ENCODE measurements at regions of chr19 and their contacts with region 1.

Region 1: DNA sequence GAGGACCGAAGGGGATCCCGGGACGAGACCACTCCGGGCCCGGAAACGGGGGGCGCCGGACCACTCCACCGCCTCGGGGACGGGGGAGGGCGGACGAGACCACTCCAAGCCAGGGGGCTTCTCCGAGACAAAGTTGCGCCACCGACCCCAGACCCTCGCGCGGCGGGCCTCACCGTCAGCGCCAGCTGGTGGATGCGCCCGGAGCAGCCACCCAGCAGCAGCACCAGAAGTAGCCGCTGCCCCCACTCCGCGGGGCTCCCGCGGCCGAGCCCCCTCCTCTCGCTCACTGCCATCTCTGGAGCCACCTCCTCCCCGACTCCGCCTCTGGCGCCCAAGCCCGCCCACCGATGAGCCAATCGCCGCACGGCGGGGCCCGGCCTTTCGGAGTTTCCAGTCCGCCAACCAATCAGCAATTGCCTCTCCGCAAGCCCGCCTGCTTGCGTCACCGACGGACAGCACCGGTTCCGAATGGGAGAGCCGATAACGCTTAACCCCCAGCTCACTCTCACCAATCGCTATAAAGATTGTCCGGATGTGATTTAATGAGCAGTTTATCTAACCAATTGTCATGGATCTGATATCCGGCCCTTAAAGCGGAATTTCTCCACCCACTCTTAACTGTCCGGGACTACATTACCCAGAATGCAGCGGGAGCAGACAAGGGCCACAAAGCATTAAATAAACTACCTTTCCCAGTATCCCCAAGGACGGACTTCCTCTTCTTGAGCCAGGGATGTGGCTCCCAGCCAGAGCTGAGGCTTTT is at the start of gene GPR108:
- DNase-seq: peak; percentile 97 to 100 (median 99)
- ATAC-seq: peak; percentile 79
- H3K4me3 ChIP-seq: peak within 1 kb of the TSS; percentile 77
- H3K4me3 Mint-ChIP-seq: peak within 1 kb of the TSS; percentile 97
- H3K27ac ChIP-seq: peak within 1 kb of the TSS; percentile 74 to 92
- H3K27ac Mint-ChIP-seq: peak within 1 kb of the TSS; percentile 85
- H3K4me1 ChIP-seq: peaks cover 56% of the 10 kb centered on the region
- H3K4me1 Mint-ChIP-seq: peaks cover 44% of the 10 kb centered on the region
- H3K27me3 ChIP-seq: no peaks in the 10 kb centered on the region
- H3K27me3 Mint-ChIP-seq: no peaks in the 10 kb centered on the region
- CTCF ChIP-seq: no peak
- total RNA-seq, gene GPR108: 34.5 to 36.6 TPM

Region 2: GRCh38 chr19:6460101-6460853 is 277.2 kb before region 1 on chr19:
- CTCF ChIA-PET with region 1: no interaction called
- POLR2A ChIA-PET with region 1: no interaction called
- intact Hi-C with region 1: loop called in 1 of 2 experiments (anchors 5 kb)
- DNase-seq: peak; percentile 95 to 97 (median 96)
- ATAC-seq: peak; percentile 80
- H3K4me3 ChIP-seq: peak overlapping the region; percentile 68
- H3K4me3 Mint-ChIP-seq: peak overlapping the region; percentile 91
- H3K27ac ChIP-seq: peak overlapping the region; percentile 44 to 89
- H3K27ac Mint-ChIP-seq: peak overlapping the region; percentile 86
- H3K4me1 ChIP-seq: peaks cover 36% of the 10 kb centered on the region
- H3K4me1 Mint-ChIP-seq: peaks cover 31% of the 10 kb centered on the region
- H3K27me3 ChIP-seq: no peaks in the 10 kb centered on the region
- H3K27me3 Mint-ChIP-seq: no peaks in the 10 kb centered on the region
- CTCF ChIP-seq: peak; percentile 75

Region 3: GRCh38 chr19:6632002-6632621 is 105.4 kb before region 1 on chr19:
- CTCF ChIA-PET with region 1: interaction called, 12 read pairs
- POLR2A ChIA-PET with region 1: no interaction called
- intact Hi-C with region 1: loop called (anchors 1 kb)
- DNase-seq: peak; percentile 39 to 91 (median 74)
- ATAC-seq: peak; percentile 77
- H3K4me3 ChIP-seq: no peak overlapping the region
- H3K4me3 Mint-ChIP-seq: no peak overlapping the region
- H3K27ac ChIP-seq: no peak overlapping the region
- H3K27ac Mint-ChIP-seq: no peak overlapping the region
- H3K4me1 ChIP-seq: peaks cover 6% of the 10 kb centered on the region
- H3K4me1 Mint-ChIP-seq: peaks cover 4% of the 10 kb centered on the region
- H3K27me3 ChIP-seq: no peaks in the 10 kb centered on the region
- H3K27me3 Mint-ChIP-seq: peaks cover 4% of the 10 kb centered on the region
- CTCF ChIP-seq: peak; percentile 94

Region 4: DNA sequence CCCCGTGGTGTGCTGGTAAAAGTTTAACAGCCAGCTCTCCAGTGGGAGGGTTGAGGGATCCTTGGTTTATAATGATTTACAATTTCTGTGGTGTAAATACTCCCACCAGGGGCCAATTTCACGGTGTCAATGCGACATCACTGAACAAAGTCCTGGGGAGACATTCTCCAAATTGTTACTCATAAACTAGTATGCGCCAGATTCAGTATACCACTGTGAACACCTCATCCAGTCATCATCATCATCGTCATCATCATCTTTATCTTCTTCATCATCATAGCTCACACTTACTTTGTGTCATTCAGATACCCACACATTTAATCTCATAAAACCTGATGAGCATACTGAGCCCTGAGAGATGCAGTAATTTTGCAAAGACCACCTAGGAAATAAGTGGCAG is 50.3 kb before region 1 on chr19:
- CTCF ChIA-PET with region 1: no interaction called
- POLR2A ChIA-PET with region 1: no interaction called
- intact Hi-C with region 1: no loop called
- DNase-seq: no peak
- ATAC-seq: no peak
- H3K4me3 ChIP-seq: no peak overlapping the region
- H3K4me3 Mint-ChIP-seq: no peak overlapping the region
- H3K27ac ChIP-seq: no peak overlapping the region
- H3K27ac Mint-ChIP-seq: no peak overlapping the region
- H3K4me1 ChIP-seq: no peaks in the 10 kb centered on the region
- H3K4me1 Mint-ChIP-seq: no peaks in the 10 kb centered on the region
- H3K27me3 ChIP-seq: peaks cover 0 to 2% of the 10 kb centered on the region in 2 experiments
- H3K27me3 Mint-ChIP-seq: no peaks in the 10 kb centered on the region
- CTCF ChIP-seq: no peak

Region 5: DNA sequence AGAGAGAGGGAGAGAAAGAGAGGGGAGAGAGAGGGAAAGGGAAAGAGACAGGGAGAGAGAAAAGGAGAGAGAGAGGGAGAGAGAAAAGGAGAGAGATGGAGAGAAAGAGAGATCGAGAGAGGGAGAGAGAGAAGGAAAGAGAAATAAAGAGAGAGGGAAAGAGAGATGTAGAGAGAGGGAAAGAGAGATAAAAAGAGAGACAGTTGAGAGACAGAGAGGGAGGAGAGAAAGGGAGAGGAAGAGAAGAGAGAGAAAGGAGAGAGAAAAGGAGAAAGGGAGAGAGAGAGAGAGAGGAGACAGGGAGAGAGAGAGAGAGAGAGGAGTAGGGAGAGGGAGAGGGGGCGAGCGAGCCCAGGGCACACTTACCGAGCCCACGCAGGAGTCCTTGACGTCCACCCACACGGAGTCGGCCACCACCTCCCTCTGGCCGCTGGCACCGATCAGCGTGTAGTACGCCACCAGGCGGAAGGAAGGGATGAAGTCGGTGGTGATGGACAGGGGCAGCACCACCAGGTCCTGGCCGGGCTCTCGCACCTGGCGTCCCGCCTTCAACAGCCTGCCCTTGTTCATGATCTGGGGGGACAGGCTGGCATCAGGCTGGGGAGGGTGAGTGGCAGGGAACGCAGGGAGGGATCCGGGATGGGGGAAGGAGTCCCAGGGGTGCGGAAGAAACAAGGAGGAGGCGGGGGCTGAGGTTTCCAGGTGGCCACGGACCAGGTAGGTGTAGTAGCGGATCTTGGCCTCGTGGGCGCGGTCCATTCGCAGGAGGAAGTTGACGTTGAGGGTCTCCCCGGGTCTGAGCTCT is 27.0 kb before region 1 on chr19:
- CTCF ChIA-PET with region 1: no interaction called
- POLR2A ChIA-PET with region 1: no interaction called
- intact Hi-C with region 1: no loop called
- DNase-seq: peak in 4 of 14 experiments; percentile 11 to 53 (median 24)
- ATAC-seq: no peak
- H3K4me3 ChIP-seq: no peak overlapping the region
- H3K4me3 Mint-ChIP-seq: no peak overlapping the region
- H3K27ac ChIP-seq: no peak overlapping the region
- H3K27ac Mint-ChIP-seq: no peak overlapping the region
- H3K4me1 ChIP-seq: peaks cover 8% of the 10 kb centered on the region
- H3K4me1 Mint-ChIP-seq: peaks cover 13% of the 10 kb centered on the region
- H3K27me3 ChIP-seq: peaks cover 13 to 21% of the 10 kb centered on the region in 2 experiments
- H3K27me3 Mint-ChIP-seq: peaks cover 34% of the 10 kb centered on the region
- CTCF ChIP-seq: no peak

Region 6: DNA sequence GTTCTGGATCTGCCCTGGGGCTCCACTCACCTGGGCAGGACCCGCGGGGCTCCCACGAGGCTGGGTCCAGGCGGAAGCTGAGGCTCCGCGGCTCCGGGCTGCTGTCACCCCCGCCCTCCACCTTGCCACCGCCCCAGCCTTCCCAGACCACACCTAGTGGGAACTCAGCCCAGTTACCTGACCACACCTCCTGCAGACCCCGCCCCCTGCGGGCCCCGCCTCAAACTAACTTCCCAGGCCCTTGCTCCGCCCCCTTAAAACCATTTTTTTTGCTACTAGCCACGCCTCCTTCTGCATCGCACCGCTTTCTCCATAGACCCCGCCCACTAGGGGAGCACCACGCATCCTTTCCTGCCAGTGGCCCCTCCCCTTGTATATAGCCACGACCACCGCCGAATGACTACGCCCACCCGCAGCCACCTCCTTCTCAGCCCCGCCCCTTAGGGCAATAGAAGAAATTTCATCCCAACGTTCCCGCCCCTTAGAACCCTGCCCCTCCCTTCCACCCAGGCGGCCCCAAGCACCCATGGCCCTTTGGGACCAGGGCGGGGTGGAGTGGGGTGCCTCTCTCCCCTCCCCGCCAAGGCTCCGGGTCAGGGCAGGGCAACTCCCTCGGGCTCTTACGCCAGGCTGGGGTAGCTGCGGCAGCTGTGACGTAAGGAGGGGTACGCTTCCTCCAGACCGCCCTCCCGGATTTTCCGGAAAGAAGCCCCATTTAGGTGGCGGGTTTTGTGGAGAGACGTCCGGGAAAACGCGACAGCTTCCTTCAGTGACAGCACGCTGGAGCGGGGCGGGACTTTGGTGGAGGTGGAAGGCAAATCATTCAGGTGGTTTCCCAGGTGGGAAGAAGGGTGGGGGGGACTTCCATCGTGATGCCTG is 30.1 kb after region 1 on chr19 and contains the start of gene SH2D3A:
- CTCF ChIA-PET with region 1: interaction called, 16 read pairs
- POLR2A ChIA-PET with region 1: interaction called, 32 read pairs
- intact Hi-C with region 1: loop called (anchors 1 kb)
- DNase-seq: peak; percentile 90 to 99 (median 95)
- ATAC-seq: peak; percentile 71
- H3K4me3 ChIP-seq: peak within 1 kb of the TSS; percentile 92
- H3K4me3 Mint-ChIP-seq: peak within 1 kb of the TSS; percentile 92
- H3K27ac ChIP-seq: peak within 1 kb of the TSS; percentile 93
- H3K27ac Mint-ChIP-seq: peak within 1 kb of the TSS; percentile 96
- H3K4me1 ChIP-seq: peaks cover 65% of the 10 kb centered on the region
- H3K4me1 Mint-ChIP-seq: peaks cover 47% of the 10 kb centered on the region
- H3K27me3 ChIP-seq: no peaks in the 10 kb centered on the region
- H3K27me3 Mint-ChIP-seq: no peaks in the 10 kb centered on the region
- CTCF ChIP-seq: no peak
- total RNA-seq, gene SH2D3A: 39.2 to 41.3 TPM

Region 7: DNA sequence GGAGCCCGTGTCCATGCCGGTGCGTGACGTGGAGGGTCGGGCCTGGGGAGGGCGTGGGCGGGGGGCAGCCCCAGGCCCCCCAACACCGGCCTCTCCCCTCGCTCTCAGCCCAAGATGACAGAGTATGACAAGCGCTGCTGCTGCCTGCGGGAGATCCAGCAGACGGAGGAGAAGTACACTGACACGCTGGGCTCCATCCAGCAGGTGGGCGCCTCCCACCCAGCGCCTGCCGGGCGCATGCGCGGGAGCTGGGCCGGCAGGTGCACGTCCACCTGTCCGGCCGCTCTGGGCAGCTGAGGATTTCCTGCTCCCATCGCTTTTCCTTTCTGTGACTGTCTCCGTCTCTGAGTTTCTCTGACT is 84.8 kb after region 1 on chr19:
- CTCF ChIA-PET with region 1: no interaction called
- POLR2A ChIA-PET with region 1: no interaction called
- intact Hi-C with region 1: no loop called
- DNase-seq: no peak
- ATAC-seq: no peak
- H3K4me3 ChIP-seq: no peak overlapping the region
- H3K4me3 Mint-ChIP-seq: no peak overlapping the region
- H3K27ac ChIP-seq: no peak overlapping the region
- H3K27ac Mint-ChIP-seq: no peak overlapping the region
- H3K4me1 ChIP-seq: peaks cover 3% of the 10 kb centered on the region
- H3K4me1 Mint-ChIP-seq: peaks cover 16% of the 10 kb centered on the region
- H3K27me3 ChIP-seq: no peaks in the 10 kb centered on the region
- H3K27me3 Mint-ChIP-seq: no peaks in the 10 kb centered on the region
- CTCF ChIP-seq: no peak

Region 8: DNA sequence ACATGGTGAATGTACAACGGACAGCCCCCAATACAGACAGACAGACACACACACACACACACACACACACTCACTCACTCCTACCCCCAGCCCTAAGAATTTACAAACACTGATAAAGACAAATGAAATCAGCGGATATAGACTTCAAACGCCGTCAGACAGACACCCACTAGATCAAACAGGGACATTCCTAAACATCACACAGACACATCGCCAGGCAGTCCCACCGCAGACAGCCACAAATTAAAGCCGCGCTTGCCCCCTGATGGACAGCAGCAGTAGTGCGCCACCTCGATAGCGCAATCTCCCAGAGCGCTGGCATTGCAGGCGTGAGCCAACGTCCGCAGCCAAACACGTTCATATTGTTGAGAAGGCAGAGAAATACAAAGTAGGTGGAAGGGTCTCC is 125.2 kb after region 1 on chr19:
- CTCF ChIA-PET with region 1: interaction called, 45 read pairs
- POLR2A ChIA-PET with region 1: interaction called, 44 read pairs
- intact Hi-C with region 1: loop called (anchors 1 kb)
- DNase-seq: peak; percentile 84 to 96 (median 88)
- ATAC-seq: peak; percentile 88
- H3K4me3 ChIP-seq: peak overlapping the region; percentile 53
- H3K4me3 Mint-ChIP-seq: peak overlapping the region; percentile 59
- H3K27ac ChIP-seq: no peak overlapping the region
- H3K27ac Mint-ChIP-seq: peak overlapping the region; percentile 71
- H3K4me1 ChIP-seq: peaks cover 18% of the 10 kb centered on the region
- H3K4me1 Mint-ChIP-seq: peaks cover 29% of the 10 kb centered on the region
- H3K27me3 ChIP-seq: no peaks in the 10 kb centered on the region
- H3K27me3 Mint-ChIP-seq: no peaks in the 10 kb centered on the region
- CTCF ChIP-seq: peak; percentile 80

Region 9: GRCh38 chr19:7535035-7535992 is 797.8 kb after region 1 on chr19 and contains the start of gene PNPLA6:
- CTCF ChIA-PET with region 1: no interaction called
- POLR2A ChIA-PET with region 1: no interaction called
- intact Hi-C with region 1: loop called in 1 of 2 experiments (anchors 5 kb)
- DNase-seq: peak; percentile 85 to 95 (median 90)
- ATAC-seq: peak; percentile 77
- H3K4me3 ChIP-seq: peak within 1 kb of the TSS; percentile 93
- H3K4me3 Mint-ChIP-seq: peak within 1 kb of the TSS; percentile 98
- H3K27ac ChIP-seq: peak within 1 kb of the TSS; percentile 67 to 79
- H3K27ac Mint-ChIP-seq: peak within 1 kb of the TSS; percentile 87
- H3K4me1 ChIP-seq: peaks cover 40% of the 10 kb centered on the region
- H3K4me1 Mint-ChIP-seq: peaks cover 29% of the 10 kb centered on the region
- H3K27me3 ChIP-seq: no peaks in the 10 kb centered on the region
- H3K27me3 Mint-ChIP-seq: no peaks in the 10 kb centered on the region
- CTCF ChIP-seq: no peak
- total RNA-seq, gene PNPLA6: 62.0 to 70.9 TPM

Measured in CD4-positive, alpha-beta T cell (primary cell).